ENCODE measurements at regions of chr11 and their contacts with region 1.

Region 1: GRCh38 chr11:1908618-1909017 is 10.9 kb upstream of the TNNT3 start:
- DNase-seq: no peak
- ATAC-seq: no peak
- H3K4me3 ChIP-seq: no peak overlapping the region
- H3K4me3 Mint-ChIP-seq: no peak overlapping the region
- H3K27ac ChIP-seq: no peak overlapping the region
- H3K27ac Mint-ChIP-seq: no peak overlapping the region
- H3K4me1 ChIP-seq: no peaks in the 10 kb centered on the region
- H3K4me1 Mint-ChIP-seq: peaks cover 0 to 2% (median 0%) of the 10 kb centered on the region in 7 donors
- H3K27me3 ChIP-seq: no peaks in the 10 kb centered on the region
- H3K27me3 Mint-ChIP-seq: peaks cover 0 to 11% (median 0%) of the 10 kb centered on the region in 5 donors

Region 2: GRCh38 chr11:1939006-1939625 is 30.5 kb after region 1 on chr11:
- CTCF ChIA-PET with region 1: no interaction called
- POLR2A ChIA-PET with region 1: no interaction called
- intact Hi-C with region 1: loop called in 1 of 2 experiments (anchors 1 kb)
- DNase-seq: peak in 3 of 9 donors; percentile 2 to 18 (median 7)
- ATAC-seq: no peak
- H3K4me3 ChIP-seq: no peak overlapping the region
- H3K4me3 Mint-ChIP-seq: peak overlapping the region in 2 of 10 donors; percentile 23 to 32
- H3K27ac ChIP-seq: no peak overlapping the region
- H3K27ac Mint-ChIP-seq: peak overlapping the region in 1 of 9 donors; percentile 37
- H3K4me1 ChIP-seq: no peaks in the 10 kb centered on the region
- H3K4me1 Mint-ChIP-seq: peaks cover 0 to 24% (median 7%) of the 10 kb centered on the region in 7 donors
- H3K27me3 ChIP-seq: no peaks in the 10 kb centered on the region
- H3K27me3 Mint-ChIP-seq: peaks cover 0 to 3% (median 0%) of the 10 kb centered on the region in 5 donors

Measured in naive thymus-derived CD4-positive, alpha-beta T cell (primary cell).